Heart right ventricle (tissue), 16 donors: ENCODE measurements at regions of chr20 and their contacts with region 1.

Region 1: DNA sequence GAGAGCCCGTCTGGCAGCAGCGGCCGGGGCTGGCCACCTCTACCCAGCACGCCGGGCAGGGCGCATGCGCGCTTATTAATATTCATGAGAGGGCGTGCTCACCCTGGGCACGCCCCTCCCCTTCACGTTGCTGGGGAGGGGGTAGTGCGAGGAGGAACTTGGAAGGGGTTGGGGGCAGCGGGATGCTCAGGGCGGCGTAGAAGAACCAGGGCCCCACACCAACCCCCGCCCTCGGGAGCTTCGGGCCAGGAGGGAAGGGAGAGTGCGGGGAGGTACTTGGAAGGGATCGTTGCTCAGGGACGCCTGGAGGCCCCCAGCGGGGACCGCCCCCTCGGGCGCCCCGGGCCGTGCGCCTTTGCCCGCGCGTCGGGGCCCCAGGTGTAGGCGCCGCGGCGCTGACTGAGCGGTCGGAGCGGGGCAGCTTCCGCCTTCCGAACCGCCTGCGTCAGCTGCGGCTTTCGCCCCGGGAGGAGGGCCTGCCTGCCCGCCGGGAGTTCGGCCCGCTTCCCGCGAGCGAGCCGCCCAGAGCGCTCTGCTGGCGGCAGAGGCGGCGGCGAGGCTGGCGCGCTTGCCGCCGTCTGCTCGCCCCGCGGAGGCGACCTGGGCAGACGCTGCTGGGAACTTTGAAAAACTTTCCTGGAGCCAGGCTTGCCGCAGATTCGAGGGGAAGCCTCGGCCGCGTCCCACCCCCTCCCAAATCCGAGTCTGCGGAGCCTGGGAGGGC is at the start of gene JAG1:
- DNase-seq: peak; percentile 95 to 96
- ATAC-seq: peak; percentile 85 to 93 (median 88)
- H3K4me3 ChIP-seq: peak within 1 kb of the TSS; percentile 69 to 98 (median 87)
- H3K27ac ChIP-seq: peak within 1 kb of the TSS; percentile 89 to 100 (median 98)
- H3K4me1 ChIP-seq: peaks cover 1 to 33% (median 18%) of the 10 kb centered on the region in 9 donors
- H3K27me3 ChIP-seq: no peaks in the 10 kb centered on the region
- CTCF ChIP-seq: no peak
- total RNA-seq, gene JAG1: 23.0 to 38.2 (median 27.5) TPM

Region 2: DNA sequence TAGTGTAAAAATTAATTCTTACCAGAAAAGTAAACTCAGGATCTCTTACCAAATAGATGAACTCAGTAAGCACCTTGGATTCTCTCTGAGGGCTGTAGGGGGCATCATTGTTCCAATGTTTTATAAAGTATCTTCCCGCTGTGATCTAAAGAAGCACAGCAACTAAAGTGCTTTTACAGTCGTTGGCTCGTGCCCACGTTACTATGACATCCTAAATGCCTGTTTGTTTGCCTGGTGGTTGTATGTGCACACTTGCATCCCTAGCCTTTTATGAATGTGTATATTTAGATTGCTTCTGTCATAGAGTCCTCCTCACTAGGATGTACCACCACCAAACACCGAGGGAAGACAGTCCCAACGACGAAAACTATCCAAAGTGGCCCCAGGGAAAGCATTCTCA is 204.6 kb before region 1 on chr20:
- intact Hi-C with region 1: loop called in 2 of 10 experiments (anchors 5 kb)
- DNase-seq: peak in 1 of 2 donors; percentile 61
- ATAC-seq: peak in 7 of 8 donors; percentile 44 to 81 (median 75)
- H3K4me3 ChIP-seq: no peak overlapping the region
- H3K27ac ChIP-seq: peak overlapping the region in 2 of 10 donors; percentile 3 to 29
- H3K4me1 ChIP-seq: peaks cover 0 to 60% (median 51%) of the 10 kb centered on the region in 9 donors
- H3K27me3 ChIP-seq: no peaks in the 10 kb centered on the region
- CTCF ChIP-seq: peak; percentile 38 to 80 (median 69)

Region 3: GRCh38 chr20:10721137-10721896 is 47.2 kb after region 1 on chr20:
- intact Hi-C with region 1: loop called in 2 of 10 experiments (anchors 5 kb)
- DNase-seq: no peak
- ATAC-seq: peak in 1 of 8 donors; percentile 37
- H3K4me3 ChIP-seq: no peak overlapping the region
- H3K27ac ChIP-seq: peak overlapping the region in 8 of 10 donors; percentile 12 to 72 (median 40)
- H3K4me1 ChIP-seq: peaks cover 0 to 46% (median 18%) of the 10 kb centered on the region in 9 donors
- H3K27me3 ChIP-seq: no peaks in the 10 kb centered on the region
- CTCF ChIP-seq: no peak

Region 4: DNA sequence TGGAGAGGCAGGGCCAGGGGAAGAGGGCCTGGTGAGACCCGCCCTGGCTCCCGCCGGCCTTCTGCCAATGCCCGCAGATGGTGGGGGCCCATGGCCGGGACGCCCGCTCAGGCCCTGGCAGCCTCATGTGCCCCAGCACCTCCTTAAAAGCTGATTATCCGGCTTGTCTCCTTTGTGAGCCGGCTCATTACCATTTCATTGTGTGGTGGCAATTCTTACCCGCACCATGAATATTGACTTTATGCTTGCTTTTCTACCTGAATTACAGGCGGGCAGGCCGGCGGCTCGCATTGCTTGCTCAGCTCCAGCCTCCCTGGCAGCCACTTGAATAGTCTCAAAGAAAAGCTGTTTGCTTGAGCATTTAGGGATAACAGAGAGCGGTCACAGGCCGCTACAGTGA is 119.6 kb after region 1 on chr20:
- intact Hi-C with region 1: loop called in 1 of 10 experiments (anchors 5 kb)
- DNase-seq: no peak
- ATAC-seq: no peak
- H3K4me3 ChIP-seq: no peak overlapping the region
- H3K27ac ChIP-seq: no peak overlapping the region
- H3K4me1 ChIP-seq: peaks cover 0 to 9% (median 0%) of the 10 kb centered on the region in 9 donors
- H3K27me3 ChIP-seq: no peaks in the 10 kb centered on the region
- CTCF ChIP-seq: no peak

Region 5: GRCh38 chr20:10922941-10923340 is 248.8 kb after region 1 on chr20:
- intact Hi-C with region 1: loop called in 1 of 10 experiments (anchors 10 kb)
- DNase-seq: no peak
- ATAC-seq: no peak
- H3K4me3 ChIP-seq: no peak overlapping the region
- H3K27ac ChIP-seq: no peak overlapping the region
- H3K4me1 ChIP-seq: peaks cover 0 to 11% (median 2%) of the 10 kb centered on the region in 9 donors
- H3K27me3 ChIP-seq: no peaks in the 10 kb centered on the region
- CTCF ChIP-seq: no peak

Region 6: GRCh38 chr20:11080781-11081377 is 406.7 kb after region 1 on chr20:
- intact Hi-C with region 1: loop called in 1 of 10 experiments (anchors 10 kb)
- DNase-seq: peak in 1 of 2 donors; percentile 11
- ATAC-seq: peak in 7 of 8 donors; percentile 17 to 88 (median 58)
- H3K4me3 ChIP-seq: no peak overlapping the region
- H3K27ac ChIP-seq: peak overlapping the region in 3 of 10 donors; percentile 25 to 62 (median 46)
- H3K4me1 ChIP-seq: peaks cover 0 to 17% (median 7%) of the 10 kb centered on the region in 9 donors
- H3K27me3 ChIP-seq: no peaks in the 10 kb centered on the region
- CTCF ChIP-seq: no peak

Region 7: GRCh38 chr20:11274141-11274594 is 600.0 kb after region 1 on chr20:
- intact Hi-C with region 1: loop called in 8 of 10 experiments (anchors 2 to 10 kb)
- DNase-seq: peak in 1 of 2 donors; percentile 45
- ATAC-seq: peak; percentile 69 to 95 (median 92)
- H3K4me3 ChIP-seq: no peak overlapping the region
- H3K27ac ChIP-seq: no peak overlapping the region
- H3K4me1 ChIP-seq: peaks cover 0 to 9% (median 5%) of the 10 kb centered on the region in 9 donors
- H3K27me3 ChIP-seq: no peaks in the 10 kb centered on the region
- CTCF ChIP-seq: peak; percentile 51 to 86 (median 73)

Region 8: DNA sequence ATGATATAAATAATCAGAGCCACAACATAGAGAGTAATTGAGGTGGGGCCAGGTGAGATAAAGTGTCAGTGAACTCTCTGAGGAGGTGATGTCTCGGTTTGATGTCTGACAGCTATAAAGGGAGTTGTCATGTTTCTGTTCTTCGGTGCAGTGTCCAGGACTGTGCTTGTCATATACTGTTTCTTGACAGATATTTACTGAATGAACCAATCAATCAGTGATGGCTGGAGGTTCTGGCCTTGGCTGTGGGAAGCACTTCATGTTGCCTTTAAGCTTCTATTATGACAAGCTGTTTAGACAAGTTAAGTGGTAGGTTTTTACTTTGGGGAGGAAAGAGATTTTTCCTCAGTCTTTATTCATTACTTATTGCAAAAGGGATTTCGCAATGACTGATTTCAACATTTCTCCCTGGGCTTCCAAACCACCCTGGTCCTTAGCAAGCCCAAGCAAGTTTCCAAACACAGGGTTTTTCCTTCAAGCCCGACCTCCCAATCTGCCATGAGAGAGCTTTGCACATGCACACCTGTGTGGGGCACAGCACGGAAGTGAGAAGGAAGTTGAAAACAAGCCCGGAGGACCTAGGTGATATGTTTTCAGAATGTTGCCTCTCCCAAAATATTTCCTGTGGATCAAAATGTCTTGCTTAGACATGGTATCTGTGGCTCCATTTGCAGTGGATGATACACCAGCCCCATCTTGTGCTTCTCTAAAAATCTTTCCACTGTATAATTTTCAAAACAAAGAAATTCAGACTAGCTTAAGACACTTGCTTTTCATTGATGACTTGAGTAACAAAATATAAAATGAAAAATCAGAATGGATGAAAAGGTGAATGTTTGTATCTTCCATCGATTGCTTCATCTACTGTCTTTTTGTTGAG is 676.2 kb after region 1 on chr20:
- intact Hi-C with region 1: no loop called
- DNase-seq: no peak
- ATAC-seq: peak in 2 of 8 donors; percentile 33 to 55
- H3K4me3 ChIP-seq: no peak overlapping the region
- H3K27ac ChIP-seq: no peak overlapping the region
- H3K4me1 ChIP-seq: peaks cover 0 to 6% (median 0%) of the 10 kb centered on the region in 9 donors
- H3K27me3 ChIP-seq: no peaks in the 10 kb centered on the region
- CTCF ChIP-seq: no peak